Endothelial cell of umbilical vein (primary cell): ENCODE measurements at regions of chr6 and their contacts with region 1.

Region 1: GRCh38 chr6:158554611-158555361 is 5.1 kb upstream of the TMEM181 start:
- DNase-seq: peak; percentile 81
- H3K4me3 ChIP-seq: peak overlapping the region in 1 of 3 experiments; percentile 11
- H3K27ac ChIP-seq: peak overlapping the region; percentile 81
- H3K4me1 ChIP-seq: peaks cover 35% of the 10 kb centered on the region
- H3K27me3 ChIP-seq: no peaks in the 10 kb centered on the region
- CTCF ChIP-seq: no peak
- POLR2A ChIP-seq: no peak

Region 2: GRCh38 chr6:158290659-158291058 is 264.1 kb before region 1 on chr6:
- CTCF ChIA-PET with region 1: no interaction called
- POLR2A ChIA-PET with region 1: no interaction called
- dilution Hi-C with region 1: no loop called
- intact Hi-C with region 1: no loop called
- DNase-seq: no peak
- H3K4me3 ChIP-seq: no peak overlapping the region
- H3K27ac ChIP-seq: no peak overlapping the region
- H3K4me1 ChIP-seq: peaks cover 14% of the 10 kb centered on the region
- H3K27me3 ChIP-seq: no peaks in the 10 kb centered on the region
- CTCF ChIP-seq: no peak
- POLR2A ChIP-seq: no peak

Region 3: GRCh38 chr6:158536084-158536890 is 18.5 kb before region 1 on chr6:
- CTCF ChIA-PET with region 1: interaction called, 4 read pairs
- POLR2A ChIA-PET with region 1: no interaction called
- dilution Hi-C with region 1: no loop called
- intact Hi-C with region 1: loop called (anchors 1 kb)
- DNase-seq: peak; percentile 64
- H3K4me3 ChIP-seq: peak overlapping the region; percentile 32 to 42 (median 39)
- H3K27ac ChIP-seq: no peak overlapping the region
- H3K4me1 ChIP-seq: peaks cover 7% of the 10 kb centered on the region
- H3K27me3 ChIP-seq: peaks cover 22 to 45% of the 10 kb centered on the region in 2 experiments
- CTCF ChIP-seq: no peak
- POLR2A ChIP-seq: no peak